CD8-positive, alpha-beta memory T cell (primary cell): ENCODE measurements at regions of chr10 and their contacts with region 1.

Region 1: GRCh38 chr10:102673819-102674511 is 29.7 kb downstream of the TRIM8 start:
- DNase-seq: peak; percentile 37 to 91 (median 82)
- H3K4me3 ChIP-seq: peak overlapping the region; percentile 46
- H3K4me3 Mint-ChIP-seq: peak overlapping the region; percentile 45 to 88 (median 78)
- H3K27ac ChIP-seq: peak overlapping the region; percentile 25
- H3K27ac Mint-ChIP-seq: peak overlapping the region; percentile 79 to 94 (median 92)
- H3K4me1 ChIP-seq: peaks cover 27% of the 10 kb centered on the region
- H3K4me1 Mint-ChIP-seq: peaks cover 34 to 59% (median 49%) of the 10 kb centered on the region in 3 donors
- H3K27me3 ChIP-seq: no peaks in the 10 kb centered on the region
- H3K27me3 Mint-ChIP-seq: no peaks in the 10 kb centered on the region

Region 2: GRCh38 chr10:102641880-102642735 is 31.9 kb before region 1 on chr10:
- CTCF ChIA-PET with region 1: interaction called, 39 read pairs
- POLR2A ChIA-PET with region 1: interaction called, 36 read pairs
- DNase-seq: peak; percentile 93 to 99 (median 97)
- H3K4me3 ChIP-seq: peak overlapping the region; percentile 73
- H3K4me3 Mint-ChIP-seq: peak overlapping the region; percentile 93 to 96 (median 94)
- H3K27ac ChIP-seq: peak overlapping the region; percentile 88
- H3K27ac Mint-ChIP-seq: peak overlapping the region; percentile 52 to 98 (median 98)
- H3K4me1 ChIP-seq: peaks cover 8% of the 10 kb centered on the region
- H3K4me1 Mint-ChIP-seq: peaks cover 18% of the 10 kb centered on the region in 3 donors
- H3K27me3 ChIP-seq: no peaks in the 10 kb centered on the region
- H3K27me3 Mint-ChIP-seq: peaks cover 0 to 2% of the 10 kb centered on the region in 2 donors

Region 3: DNA sequence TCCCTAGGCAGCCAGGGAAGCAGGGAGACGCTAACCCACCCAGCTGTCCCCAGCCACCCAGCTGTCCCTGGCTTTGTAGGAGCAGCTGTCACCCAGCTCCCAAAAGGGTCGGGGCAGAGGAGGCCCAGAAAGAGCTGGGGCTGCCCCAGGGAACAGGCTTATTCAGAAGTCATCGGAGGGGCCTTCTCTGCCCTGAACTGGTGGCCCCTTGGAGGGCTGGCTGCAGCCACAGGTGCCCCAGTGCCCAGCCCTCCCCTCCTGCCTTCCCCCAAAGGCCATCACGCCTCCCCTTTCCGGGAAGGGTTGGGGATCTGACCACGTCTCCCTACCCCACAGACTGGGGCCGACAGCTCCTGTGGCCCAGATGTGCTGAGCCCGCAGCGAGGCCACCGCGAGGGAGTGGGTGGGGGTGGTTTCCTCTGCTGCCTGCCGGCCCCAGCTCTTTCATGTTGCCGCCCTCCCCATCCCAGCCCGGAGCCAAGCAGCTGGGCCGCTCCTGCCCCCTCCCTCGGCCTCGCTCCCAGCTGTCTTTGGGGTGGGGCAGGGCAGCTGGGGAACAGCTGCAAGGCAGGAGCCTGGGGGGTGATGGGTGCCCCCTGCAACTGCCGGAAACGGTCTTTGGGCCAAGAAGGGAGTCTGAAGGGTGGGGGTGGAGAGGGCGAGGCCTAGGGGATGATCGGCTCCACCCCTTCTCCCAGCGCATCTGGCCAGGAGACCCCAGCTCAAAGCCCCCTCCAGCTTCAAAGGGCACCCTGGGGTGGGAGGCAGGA is 12.9 kb before region 1 on chr10:
- CTCF ChIA-PET with region 1: interaction called, 12 read pairs
- POLR2A ChIA-PET with region 1: interaction called, 11 read pairs
- DNase-seq: peak; percentile 41 to 75 (median 53)
- H3K4me3 ChIP-seq: peak overlapping the region; percentile 29
- H3K4me3 Mint-ChIP-seq: peak overlapping the region; percentile 3 to 80 (median 71)
- H3K27ac ChIP-seq: no peak overlapping the region
- H3K27ac Mint-ChIP-seq: peak overlapping the region; percentile 75 to 94 (median 84)
- H3K4me1 ChIP-seq: peaks cover 34% of the 10 kb centered on the region
- H3K4me1 Mint-ChIP-seq: peaks cover 27 to 42% (median 34%) of the 10 kb centered on the region in 3 donors
- H3K27me3 ChIP-seq: no peaks in the 10 kb centered on the region
- H3K27me3 Mint-ChIP-seq: no peaks in the 10 kb centered on the region

Region 4: GRCh38 chr10:102796407-102797176 is 122.6 kb after region 1 on chr10:
- CTCF ChIA-PET with region 1: no interaction called
- POLR2A ChIA-PET with region 1: no interaction called
- DNase-seq: peak in 4 of 5 donors; percentile 7 to 56 (median 20)
- H3K4me3 ChIP-seq: no peak overlapping the region
- H3K4me3 Mint-ChIP-seq: peak overlapping the region in 4 of 7 donors; percentile 8 to 48 (median 26)
- H3K27ac ChIP-seq: no peak overlapping the region
- H3K27ac Mint-ChIP-seq: peak overlapping the region in 7 of 8 donors; percentile 15 to 60 (median 29)
- H3K4me1 ChIP-seq: peaks cover 21% of the 10 kb centered on the region
- H3K4me1 Mint-ChIP-seq: peaks cover 38 to 64% (median 43%) of the 10 kb centered on the region in 3 donors
- H3K27me3 ChIP-seq: no peaks in the 10 kb centered on the region
- H3K27me3 Mint-ChIP-seq: no peaks in the 10 kb centered on the region

Region 5: GRCh38 chr10:102853944-102854694 is 180.2 kb after region 1 on chr10 and contains the start of gene BORCS7:
- CTCF ChIA-PET with region 1: no interaction called
- POLR2A ChIA-PET with region 1: no interaction called
- DNase-seq: peak; percentile 73 to 91 (median 85)
- H3K4me3 ChIP-seq: peak within 1 kb of the TSS; percentile 91
- H3K4me3 Mint-ChIP-seq: peak within 1 kb of the TSS; percentile 82 to 99 (median 95)
- H3K27ac ChIP-seq: peak within 1 kb of the TSS; percentile 86
- H3K27ac Mint-ChIP-seq: peak within 1 kb of the TSS; percentile 86 to 99 (median 98)
- H3K4me1 ChIP-seq: peaks cover 6% of the 10 kb centered on the region
- H3K4me1 Mint-ChIP-seq: peaks cover 10 to 21% (median 13%) of the 10 kb centered on the region in 3 donors
- H3K27me3 ChIP-seq: no peaks in the 10 kb centered on the region
- H3K27me3 Mint-ChIP-seq: no peaks in the 10 kb centered on the region
- total RNA-seq, gene BORCS7: 9.8 to 11.3 TPM